CD8-positive, alpha-beta T cell (primary cell): ENCODE measurements at regions of chr11 and their contacts with region 1.

Region 1: DNA sequence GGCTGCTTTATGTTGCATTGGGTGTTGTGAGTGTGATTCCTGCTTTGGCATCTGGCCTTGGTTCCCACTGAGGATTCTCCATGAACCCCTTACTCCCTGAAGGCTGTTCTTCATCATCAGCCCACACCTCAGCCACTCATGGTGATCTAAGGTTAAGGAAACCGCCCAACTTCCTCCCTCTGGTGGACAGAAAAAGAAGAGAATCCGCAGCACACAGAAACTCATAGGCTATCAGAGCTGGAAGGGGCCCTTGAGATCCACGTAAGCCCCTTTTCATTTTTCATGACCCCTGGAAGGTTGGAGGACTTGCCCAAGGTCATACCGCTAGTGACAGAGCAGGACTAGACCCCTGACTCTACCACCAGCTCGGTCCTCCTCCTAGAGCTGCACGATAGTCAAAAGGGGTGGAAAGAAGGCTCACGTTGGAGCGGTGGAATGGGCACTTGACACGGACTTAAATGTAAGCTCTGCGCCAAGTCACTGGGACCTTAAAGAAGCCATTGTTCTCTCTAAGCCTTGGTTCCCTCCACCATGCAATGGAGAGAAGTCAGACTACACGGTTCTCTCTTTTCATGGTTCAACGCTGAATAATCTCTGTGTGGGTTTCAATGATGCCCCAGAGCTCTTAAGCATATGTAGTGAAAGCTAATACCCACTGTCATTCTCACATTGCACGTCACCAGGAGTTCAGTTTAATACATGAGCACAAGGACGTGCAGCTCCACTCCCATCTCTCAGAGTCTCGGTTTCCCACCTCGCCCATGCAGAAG is 83.6 kb upstream of the CRTAM start:
- DNase-seq: peak; percentile 17 to 73 (median 45)
- ATAC-seq: peak; percentile 46
- H3K4me3 ChIP-seq: no peak overlapping the region
- H3K4me3 Mint-ChIP-seq: peak overlapping the region; percentile 11
- H3K27ac ChIP-seq: no peak overlapping the region
- H3K27ac Mint-ChIP-seq: no peak overlapping the region
- H3K4me1 ChIP-seq: peaks cover 36% of the 10 kb centered on the region
- H3K4me1 Mint-ChIP-seq: peaks cover 62% of the 10 kb centered on the region
- H3K27me3 ChIP-seq: no peaks in the 10 kb centered on the region
- H3K27me3 Mint-ChIP-seq: no peaks in the 10 kb centered on the region
- CTCF ChIP-seq: peak; percentile 61

Region 2: GRCh38 chr11:122578168-122578825 is 176.4 kb before region 1 on chr11:
- CTCF ChIA-PET with region 1: interaction called, 18 read pairs
- POLR2A ChIA-PET with region 1: no interaction called
- intact Hi-C with region 1: loop called (anchors 1 to 2 kb)
- DNase-seq: no peak
- ATAC-seq: no peak
- H3K4me3 ChIP-seq: no peak overlapping the region
- H3K4me3 Mint-ChIP-seq: no peak overlapping the region
- H3K27ac ChIP-seq: no peak overlapping the region
- H3K27ac Mint-ChIP-seq: no peak overlapping the region
- H3K4me1 ChIP-seq: peaks cover 4% of the 10 kb centered on the region
- H3K4me1 Mint-ChIP-seq: peaks cover 7% of the 10 kb centered on the region
- H3K27me3 ChIP-seq: no peaks in the 10 kb centered on the region
- H3K27me3 Mint-ChIP-seq: no peaks in the 10 kb centered on the region
- CTCF ChIP-seq: no peak

Region 3: DNA sequence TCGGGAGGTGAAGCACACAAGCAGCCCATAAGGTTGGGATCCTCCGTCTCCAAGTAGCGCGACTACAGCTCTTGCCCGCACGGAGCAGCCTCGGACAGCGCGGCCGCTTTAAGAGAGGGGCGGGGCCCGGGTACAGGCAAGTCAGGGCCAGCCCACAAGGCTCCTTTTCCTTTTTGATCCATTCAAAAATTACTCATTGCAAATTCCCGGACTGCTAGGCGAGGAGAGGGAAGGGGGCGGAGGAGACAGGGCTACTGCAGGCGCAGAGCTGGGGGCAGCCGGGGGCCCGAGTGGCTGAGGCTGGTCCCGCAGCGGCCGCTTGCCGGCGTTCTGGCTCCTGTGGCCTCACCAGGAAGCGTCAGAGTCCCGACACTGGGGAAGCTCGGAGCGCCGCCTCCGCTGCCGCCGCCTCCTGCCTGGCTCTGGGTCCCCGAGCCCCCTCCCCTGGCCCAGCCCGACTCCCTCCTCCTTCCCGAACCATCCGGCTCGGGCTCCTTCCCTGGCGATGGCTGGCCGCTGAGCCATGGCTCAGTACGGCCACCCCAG is 99.1 kb before region 1 on chr11 and contains the start of gene UBASH3B:
- CTCF ChIA-PET with region 1: interaction called, 128 read pairs
- POLR2A ChIA-PET with region 1: interaction called, 29 read pairs
- intact Hi-C with region 1: loop called (anchors 1 kb)
- DNase-seq: peak; percentile 10 to 75 (median 57)
- ATAC-seq: peak; percentile 72
- H3K4me3 ChIP-seq: peak within 1 kb of the TSS; percentile 96 to 97
- H3K4me3 Mint-ChIP-seq: peak within 1 kb of the TSS; percentile 99
- H3K27ac ChIP-seq: peak within 1 kb of the TSS; percentile 61 to 71
- H3K27ac Mint-ChIP-seq: peak within 1 kb of the TSS; percentile 93
- H3K4me1 ChIP-seq: peaks cover 44% of the 10 kb centered on the region
- H3K4me1 Mint-ChIP-seq: peaks cover 46% of the 10 kb centered on the region
- H3K27me3 ChIP-seq: peaks cover 0 to 2% of the 10 kb centered on the region in 2 experiments
- H3K27me3 Mint-ChIP-seq: no peaks in the 10 kb centered on the region
- CTCF ChIP-seq: no peak
- total RNA-seq, gene UBASH3B: 16.7 to 19.3 TPM

Region 4: GRCh38 chr11:122673701-122674100 is 81.0 kb before region 1 on chr11:
- CTCF ChIA-PET with region 1: interaction called, 80 read pairs
- POLR2A ChIA-PET with region 1: interaction called, 22 read pairs
- intact Hi-C with region 1: no loop called
- DNase-seq: peak in 1 of 9 experiments; percentile 32
- ATAC-seq: no peak
- H3K4me3 ChIP-seq: no peak overlapping the region
- H3K4me3 Mint-ChIP-seq: no peak overlapping the region
- H3K27ac ChIP-seq: no peak overlapping the region
- H3K27ac Mint-ChIP-seq: peak overlapping the region; percentile 39
- H3K4me1 ChIP-seq: peaks cover 73% of the 10 kb centered on the region
- H3K4me1 Mint-ChIP-seq: peaks cover 82% of the 10 kb centered on the region
- H3K27me3 ChIP-seq: no peaks in the 10 kb centered on the region
- H3K27me3 Mint-ChIP-seq: no peaks in the 10 kb centered on the region
- CTCF ChIP-seq: no peak

Region 5: GRCh38 chr11:122717264-122717867 is 37.4 kb before region 1 on chr11:
- CTCF ChIA-PET with region 1: interaction called, 24 read pairs
- POLR2A ChIA-PET with region 1: interaction called, 5 read pairs
- intact Hi-C with region 1: loop called in 1 of 2 experiments (anchors 2 kb)
- DNase-seq: peak in 8 of 9 experiments; percentile 20 to 68 (median 47)
- ATAC-seq: peak; percentile 61
- H3K4me3 ChIP-seq: no peak overlapping the region
- H3K4me3 Mint-ChIP-seq: peak overlapping the region; percentile 56
- H3K27ac ChIP-seq: peak overlapping the region; percentile 23 to 55
- H3K27ac Mint-ChIP-seq: peak overlapping the region; percentile 91
- H3K4me1 ChIP-seq: peaks cover 69% of the 10 kb centered on the region
- H3K4me1 Mint-ChIP-seq: peaks cover 80% of the 10 kb centered on the region
- H3K27me3 ChIP-seq: no peaks in the 10 kb centered on the region
- H3K27me3 Mint-ChIP-seq: no peaks in the 10 kb centered on the region
- CTCF ChIP-seq: no peak

Region 6: GRCh38 chr11:122743949-122744348 is 10.8 kb before region 1 on chr11:
- CTCF ChIA-PET with region 1: interaction called, 73 read pairs
- POLR2A ChIA-PET with region 1: interaction called, 14 read pairs
- intact Hi-C with region 1: no loop called
- DNase-seq: peak; percentile 19 to 86 (median 73)
- ATAC-seq: peak; percentile 46
- H3K4me3 ChIP-seq: peak overlapping the region; percentile 24 to 40
- H3K4me3 Mint-ChIP-seq: no peak overlapping the region
- H3K27ac ChIP-seq: peak overlapping the region; percentile 46 to 70
- H3K27ac Mint-ChIP-seq: no peak overlapping the region
- H3K4me1 ChIP-seq: peaks cover 71% of the 10 kb centered on the region
- H3K4me1 Mint-ChIP-seq: peaks cover 15% of the 10 kb centered on the region
- H3K27me3 ChIP-seq: no peaks in the 10 kb centered on the region
- H3K27me3 Mint-ChIP-seq: no peaks in the 10 kb centered on the region
- CTCF ChIP-seq: no peak

Region 7: DNA sequence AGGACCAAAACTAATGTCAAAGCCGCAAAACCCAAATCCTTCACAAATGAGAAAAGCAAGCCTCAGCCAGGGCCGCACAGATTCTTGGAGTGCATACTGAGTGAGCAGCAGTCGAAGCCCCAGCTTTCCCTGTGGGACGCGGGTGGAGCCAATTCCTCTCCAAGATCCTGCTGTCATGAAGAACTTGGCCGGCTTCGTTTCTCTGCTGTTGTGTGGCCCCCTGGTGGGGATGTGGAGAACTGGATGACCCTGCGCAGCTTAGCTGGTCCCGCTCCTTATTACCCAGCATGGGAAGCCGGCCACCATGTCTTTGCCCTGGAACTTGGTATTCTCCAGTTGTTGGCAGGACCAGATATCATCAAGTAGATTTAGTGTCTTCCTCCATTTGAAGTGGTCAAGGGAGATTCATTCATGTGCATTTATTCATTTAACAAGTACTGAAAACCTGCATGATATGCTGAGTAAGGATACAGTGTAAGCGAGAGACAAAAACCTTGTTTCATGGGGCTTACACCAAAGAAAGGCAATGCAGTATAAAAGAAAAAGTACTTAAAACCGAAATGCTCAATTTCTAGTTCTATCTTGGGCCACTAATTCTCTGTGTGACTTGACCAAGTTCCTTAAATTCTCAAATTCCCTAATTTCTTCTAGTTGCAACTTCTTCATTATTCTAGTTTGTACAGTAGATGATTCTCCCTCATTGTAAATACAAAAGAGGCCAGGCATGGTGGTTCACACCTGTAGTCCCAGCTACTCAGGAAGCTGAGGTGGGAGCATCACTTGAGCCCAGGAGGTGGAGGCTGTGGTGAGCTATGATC is 26.8 kb after region 1 on chr11:
- CTCF ChIA-PET with region 1: interaction called, 102 read pairs
- POLR2A ChIA-PET with region 1: interaction called, 4 read pairs
- intact Hi-C with region 1: loop called (anchors 1 kb)
- DNase-seq: peak; percentile 48 to 85 (median 76)
- ATAC-seq: peak; percentile 86
- H3K4me3 ChIP-seq: no peak overlapping the region
- H3K4me3 Mint-ChIP-seq: no peak overlapping the region
- H3K27ac ChIP-seq: no peak overlapping the region
- H3K27ac Mint-ChIP-seq: no peak overlapping the region
- H3K4me1 ChIP-seq: no peaks in the 10 kb centered on the region
- H3K4me1 Mint-ChIP-seq: peaks cover 2% of the 10 kb centered on the region
- H3K27me3 ChIP-seq: no peaks in the 10 kb centered on the region
- H3K27me3 Mint-ChIP-seq: no peaks in the 10 kb centered on the region
- CTCF ChIP-seq: peak; percentile 88